ENCODE measurements at regions of chr1 and their contacts with region 1.

Region 1: GRCh38 chr1:228393248-228393699 is 13.4 kb downstream of the TRIM11 start:
- DNase-seq: no peak
- ATAC-seq: peak; percentile 36
- H3K4me3 ChIP-seq: no peak overlapping the region
- H3K27ac ChIP-seq: no peak overlapping the region
- H3K4me1 ChIP-seq: peaks cover 11 to 39% of the 10 kb centered on the region in 2 experiments; a peak in 4 of 5 replicates
- H3K27me3 ChIP-seq: no peaks in the 10 kb centered on the region
- CTCF ChIP-seq: peak; percentile 47 to 54 (median 48); a peak in 4 of 6 replicates
- EP300 ChIP-seq: no peak
- POLR2A ChIP-seq: no peak
- RAD21 ChIP-seq: peak; percentile 21 to 38; a peak in 1 of 4 replicates

Region 2: DNA sequence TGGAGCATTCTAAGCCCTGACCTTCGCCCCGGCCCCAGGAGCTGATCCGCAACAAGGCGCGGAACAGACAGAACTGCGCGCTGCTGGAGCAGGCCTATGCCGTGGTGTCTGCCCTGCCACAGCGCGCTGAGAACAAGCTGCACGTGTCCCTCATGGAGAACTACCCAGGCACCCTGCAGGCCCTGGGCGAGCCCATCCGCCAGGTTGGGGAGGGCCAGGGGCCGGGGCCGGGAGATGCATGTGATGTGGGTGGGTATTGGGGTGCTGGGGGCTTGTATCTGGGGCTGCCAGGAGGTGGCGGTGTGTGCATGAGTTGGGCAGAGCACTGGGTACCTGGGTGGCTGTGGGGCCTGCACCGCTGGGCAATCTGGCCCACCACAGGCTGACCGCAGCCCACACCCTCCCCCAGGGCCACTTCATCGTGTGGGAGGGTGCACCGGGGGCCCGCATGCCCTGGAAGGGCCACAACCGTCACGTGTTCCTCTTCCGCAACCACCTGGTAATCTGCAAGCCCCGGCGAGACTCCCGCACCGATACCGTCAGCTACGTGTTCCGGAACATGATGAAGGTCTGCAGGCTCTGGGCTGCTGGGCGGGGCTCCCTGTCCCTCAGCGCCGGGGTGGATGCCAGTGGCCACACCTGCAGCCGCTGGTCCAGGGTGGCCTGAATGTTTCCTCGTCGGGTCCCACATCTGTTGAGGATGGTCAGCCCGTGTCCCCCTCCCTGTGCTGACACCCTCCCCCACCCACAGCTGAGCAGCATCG is 52.4 kb before region 1 on chr1:
- CTCF ChIA-PET with region 1: no interaction called
- POLR2A ChIA-PET with region 1: interaction called, 3 read pairs
- in situ Hi-C with region 1: no loop called
- intact Hi-C with region 1: loop called (anchors 5 kb)
- DNase-seq: peak; percentile 82 to 88 (median 86)
- ATAC-seq: peak; percentile 88
- H3K4me3 ChIP-seq: peak overlapping the region; percentile 10; the same call in 1 of the 2 replicates
- H3K27ac ChIP-seq: no peak overlapping the region
- H3K4me1 ChIP-seq: peaks cover 5 to 59% of the 10 kb centered on the region in 2 experiments; a peak in 3 of 5 replicates
- H3K27me3 ChIP-seq: peaks cover 0 to 29% of the 10 kb centered on the region in 2 experiments; a peak in 3 of 5 replicates
- CTCF ChIP-seq: peak; percentile 79 to 88 (median 80)
- EP300 ChIP-seq: peak; percentile 77
- POLR2A ChIP-seq: no peak
- RAD21 ChIP-seq: peak; percentile 79 to 88

Region 3: DNA sequence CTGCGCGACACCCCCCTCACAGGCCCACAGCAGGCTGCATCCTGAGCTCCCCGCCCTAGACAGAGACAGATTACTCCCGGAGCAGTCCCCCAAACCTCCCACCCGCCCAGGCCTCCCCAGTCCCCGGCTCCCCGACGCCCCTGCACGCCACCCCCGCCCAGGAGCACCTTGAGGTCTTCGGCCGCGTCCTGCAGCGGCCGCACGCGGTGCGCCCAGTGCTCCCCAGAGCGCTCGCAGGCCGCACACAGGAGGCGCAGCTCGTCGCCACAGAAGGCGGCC is 12.7 kb after region 1 on chr1:
- CTCF ChIA-PET with region 1: interaction called, 4 read pairs
- POLR2A ChIA-PET with region 1: interaction called, 78 read pairs
- in situ Hi-C with region 1: no loop called
- intact Hi-C with region 1: no loop called
- DNase-seq: peak in 3 of 4 experiments; percentile 43 to 68 (median 68)
- ATAC-seq: peak; percentile 75
- H3K4me3 ChIP-seq: peak overlapping the region; percentile 100
- H3K27ac ChIP-seq: peak overlapping the region; percentile 96
- H3K4me1 ChIP-seq: peaks cover 47 to 75% of the 10 kb centered on the region in 2 experiments
- H3K27me3 ChIP-seq: no peaks in the 10 kb centered on the region
- CTCF ChIP-seq: no peak; a peak in 1 of 6 replicates
- EP300 ChIP-seq: no peak
- POLR2A ChIP-seq: no peak
- RAD21 ChIP-seq: no peak